ENCODE measurements at regions of chr16 and their contacts with region 1.

Region 1: DNA sequence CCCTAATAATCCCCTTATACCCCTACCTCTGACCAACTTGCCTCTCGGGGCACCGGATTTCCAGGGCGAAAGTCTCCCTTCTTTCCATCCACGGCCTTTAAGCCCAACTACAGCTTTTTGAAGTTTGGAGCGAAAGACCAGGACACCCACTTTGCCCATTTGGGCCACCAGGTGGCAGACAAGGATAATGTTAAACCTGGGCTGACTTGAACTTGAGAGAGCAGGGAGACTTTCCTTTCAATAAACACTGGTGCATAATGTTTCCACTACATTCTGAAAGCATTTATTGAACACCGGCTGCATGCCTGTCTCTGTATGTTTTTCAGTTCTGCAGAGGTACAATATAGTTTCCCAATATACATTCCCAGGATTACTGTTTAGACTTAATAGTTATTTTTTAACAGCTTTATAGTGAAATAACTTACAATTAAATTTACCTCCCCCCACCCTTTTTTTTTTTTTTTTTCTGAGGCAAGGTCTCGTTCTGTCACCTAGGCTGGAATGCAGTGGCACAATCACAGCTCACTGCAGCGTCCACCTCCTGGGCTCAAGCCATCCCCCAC is 6.9 kb upstream of the CES3 start:
- DNase-seq: peak; percentile 63 to 73 (median 69)
- H3K4me3 ChIP-seq: no peak overlapping the region
- H3K4me3 Mint-ChIP-seq: no peak overlapping the region
- H3K27ac ChIP-seq: no peak overlapping the region
- H3K27ac Mint-ChIP-seq: peak overlapping the region in 1 of 7 donors; percentile 12
- H3K4me1 ChIP-seq: no peaks in the 10 kb centered on the region
- H3K4me1 Mint-ChIP-seq: peaks cover 2 to 7% (median 3%) of the 10 kb centered on the region in 4 donors
- H3K27me3 ChIP-seq: peaks cover 8% of the 10 kb centered on the region
- H3K27me3 Mint-ChIP-seq: peaks cover 25 to 33% of the 10 kb centered on the region in 2 donors

Region 2: GRCh38 chr16:66894948-66895688 is 59.1 kb before region 1 on chr16:
- CTCF ChIA-PET with region 1: interaction called, 4 read pairs
- POLR2A ChIA-PET with region 1: no interaction called
- intact Hi-C with region 1: loop called (anchors 2 kb)
- DNase-seq: peak; percentile 42 to 61 (median 53)
- H3K4me3 ChIP-seq: no peak overlapping the region
- H3K4me3 Mint-ChIP-seq: no peak overlapping the region
- H3K27ac ChIP-seq: no peak overlapping the region
- H3K27ac Mint-ChIP-seq: peak overlapping the region in 3 of 7 donors; percentile 14 to 78 (median 42)
- H3K4me1 ChIP-seq: peaks cover 3% of the 10 kb centered on the region
- H3K4me1 Mint-ChIP-seq: peaks cover 3 to 12% (median 9%) of the 10 kb centered on the region in 4 donors
- H3K27me3 ChIP-seq: no peaks in the 10 kb centered on the region
- H3K27me3 Mint-ChIP-seq: no peaks in the 10 kb centered on the region

Region 3: GRCh38 chr16:67415872-67416793 is 462.0 kb after region 1 on chr16 and contains the start of gene ZDHHC1:
- CTCF ChIA-PET with region 1: no interaction called
- POLR2A ChIA-PET with region 1: no interaction called
- intact Hi-C with region 1: loop called (anchors 1 kb)
- DNase-seq: peak in 4 of 5 donors; percentile 28 to 42 (median 34)
- H3K4me3 ChIP-seq: peak within 1 kb of the TSS in 1 of 2 donors; percentile 27
- H3K4me3 Mint-ChIP-seq: peak within 1 kb of the TSS; percentile 55 to 88 (median 76)
- H3K27ac ChIP-seq: peak within 1 kb of the TSS; percentile 26
- H3K27ac Mint-ChIP-seq: peak within 1 kb of the TSS in 4 of 7 donors; percentile 30 to 83 (median 75)
- H3K4me1 ChIP-seq: peaks cover 9% of the 10 kb centered on the region
- H3K4me1 Mint-ChIP-seq: peaks cover 5 to 16% (median 9%) of the 10 kb centered on the region in 4 donors
- H3K27me3 ChIP-seq: peaks cover 11% of the 10 kb centered on the region
- H3K27me3 Mint-ChIP-seq: peaks cover 19 to 38% of the 10 kb centered on the region in 2 donors
- total RNA-seq, gene ZDHHC1: not detected

Region 4: DNA sequence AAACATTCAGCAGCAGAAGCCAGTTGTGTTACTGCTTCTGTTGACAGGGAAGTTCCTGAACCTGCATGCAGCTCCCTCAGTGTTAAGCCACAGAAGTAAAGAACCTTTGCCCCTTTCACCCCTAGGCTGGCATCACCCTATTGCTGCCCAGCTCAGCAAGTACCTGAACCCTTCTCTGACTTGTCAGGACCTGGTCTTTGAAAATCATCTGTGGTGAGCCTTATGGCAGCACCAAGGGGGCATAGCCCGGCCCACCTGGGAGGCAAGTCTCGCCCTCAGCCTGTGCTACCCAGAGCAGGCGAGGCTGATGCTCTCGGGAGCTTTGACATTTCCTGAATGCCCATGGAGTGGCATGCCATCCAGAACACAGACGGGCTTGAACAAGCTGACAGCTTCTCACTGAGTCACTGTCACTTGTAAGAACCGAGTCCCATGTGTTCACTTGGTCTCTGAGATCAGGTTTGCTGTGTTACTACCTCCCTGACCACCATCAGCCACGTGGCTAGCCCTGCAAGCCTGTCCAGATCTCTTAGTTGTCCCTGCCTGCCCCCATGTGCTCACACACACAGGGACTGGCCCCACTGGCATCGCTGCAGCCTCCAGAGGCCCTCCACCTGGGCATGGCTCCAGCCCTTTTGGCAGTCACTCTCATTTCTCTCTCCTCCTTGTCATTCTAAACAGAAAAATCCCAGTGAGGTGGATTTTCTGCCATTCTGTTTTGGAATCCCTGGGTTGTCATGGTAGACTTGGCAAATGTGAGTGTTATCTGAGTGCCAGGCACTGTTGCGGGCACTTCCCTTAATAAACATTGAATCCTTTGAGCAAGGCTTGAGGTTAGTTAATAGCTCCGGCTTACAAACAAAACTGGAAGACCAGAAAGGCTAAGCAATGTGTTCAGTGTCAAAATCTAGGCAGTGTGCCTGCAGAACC is 687.9 kb after region 1 on chr16:
- CTCF ChIA-PET with region 1: no interaction called
- POLR2A ChIA-PET with region 1: no interaction called
- intact Hi-C with region 1: no loop called
- DNase-seq: no peak
- H3K4me3 ChIP-seq: no peak overlapping the region
- H3K4me3 Mint-ChIP-seq: no peak overlapping the region
- H3K27ac ChIP-seq: no peak overlapping the region
- H3K27ac Mint-ChIP-seq: peak overlapping the region in 1 of 7 donors; percentile 13
- H3K4me1 ChIP-seq: peaks cover 30% of the 10 kb centered on the region
- H3K4me1 Mint-ChIP-seq: peaks cover 2 to 28% (median 11%) of the 10 kb centered on the region in 4 donors
- H3K27me3 ChIP-seq: no peaks in the 10 kb centered on the region
- H3K27me3 Mint-ChIP-seq: no peaks in the 10 kb centered on the region

Measured in CD4-positive, alpha-beta memory T cell (primary cell).